ENCODE measurements at regions of chr14 and their contacts with region 1.

Region 1: GRCh38 chr14:100108042-100108825 is 43.0 kb downstream of the EVL start:
- DNase-seq: peak; percentile 82
- ATAC-seq: peak; percentile 85
- H3K4me3 ChIP-seq: no peak overlapping the region
- H3K4me3 Mint-ChIP-seq: no peak overlapping the region
- H3K27ac ChIP-seq: peak overlapping the region; percentile 27 to 56
- H3K27ac Mint-ChIP-seq: peak overlapping the region; percentile 84
- H3K4me1 ChIP-seq: peaks cover 12 to 32% of the 10 kb centered on the region in 2 donors
- H3K4me1 Mint-ChIP-seq: peaks cover 51% of the 10 kb centered on the region
- H3K27me3 ChIP-seq: no peaks in the 10 kb centered on the region
- H3K27me3 Mint-ChIP-seq: no peaks in the 10 kb centered on the region
- CTCF ChIP-seq: peak; percentile 82

Region 2: DNA sequence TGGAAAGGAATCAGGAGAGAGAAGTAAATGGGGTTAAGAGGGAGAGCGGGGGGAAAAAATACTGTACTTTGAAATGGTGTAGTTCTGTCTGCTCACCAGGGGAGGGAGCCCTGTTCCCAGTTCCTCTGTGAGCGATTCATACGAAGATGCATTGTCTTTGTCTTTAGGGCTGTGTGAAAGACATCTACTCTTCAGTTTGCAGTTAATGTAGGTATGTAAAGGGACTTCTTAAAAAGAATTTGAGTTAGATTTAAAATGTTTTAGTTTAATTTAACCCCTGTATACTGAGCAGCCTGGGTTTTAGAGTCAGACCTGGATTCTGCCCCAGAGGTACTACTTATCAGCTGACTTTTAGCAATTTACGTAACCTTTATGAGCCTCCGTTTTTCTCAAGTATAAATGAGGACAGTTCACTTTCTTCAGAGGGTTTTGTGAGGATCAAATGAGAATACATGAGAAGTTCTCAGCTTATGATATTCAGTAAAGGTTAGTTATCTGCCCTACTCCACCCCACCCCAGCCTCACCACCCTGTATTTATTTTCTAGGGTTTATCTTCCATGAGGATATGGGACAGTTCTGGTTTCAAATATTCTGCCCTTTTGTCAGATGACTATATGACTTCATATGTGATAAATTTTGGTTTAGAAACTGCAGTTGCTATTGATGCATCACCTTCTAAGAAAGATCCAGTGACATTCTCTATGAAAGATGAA is 125.5 kb before region 1 on chr14:
- CTCF ChIA-PET with region 1: interaction called, 48 read pairs
- POLR2A ChIA-PET with region 1: no interaction called
- intact Hi-C with region 1: loop called (anchors 1 kb)
- DNase-seq: peak; percentile 74
- ATAC-seq: peak; percentile 99
- H3K4me3 ChIP-seq: no peak overlapping the region
- H3K4me3 Mint-ChIP-seq: no peak overlapping the region
- H3K27ac ChIP-seq: no peak overlapping the region
- H3K27ac Mint-ChIP-seq: no peak overlapping the region
- H3K4me1 ChIP-seq: no peaks in the 10 kb centered on the region
- H3K4me1 Mint-ChIP-seq: no peaks in the 10 kb centered on the region
- H3K27me3 ChIP-seq: no peaks in the 10 kb centered on the region
- H3K27me3 Mint-ChIP-seq: no peaks in the 10 kb centered on the region
- CTCF ChIP-seq: peak; percentile 96

Region 3: DNA sequence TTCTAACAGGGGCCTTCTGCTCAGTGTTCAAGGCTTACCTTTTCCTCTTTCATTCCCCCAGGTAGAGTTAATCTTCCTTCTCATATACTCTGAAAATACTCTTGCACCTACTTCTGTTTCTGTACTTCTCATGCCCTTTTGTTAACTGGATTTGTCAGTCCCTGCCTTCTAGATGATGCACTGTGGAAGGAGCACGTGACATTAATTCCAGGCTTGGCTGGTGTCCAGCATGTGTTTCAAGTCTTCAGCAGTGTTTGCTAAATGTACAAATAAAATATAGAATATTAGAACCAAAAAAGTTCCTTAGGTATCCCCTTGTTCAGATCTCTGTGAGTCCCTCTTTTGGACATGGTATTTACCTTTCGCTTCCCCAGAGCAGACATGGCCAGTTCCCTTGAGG is 70.9 kb before region 1 on chr14:
- CTCF ChIA-PET with region 1: interaction called, 12 read pairs
- POLR2A ChIA-PET with region 1: no interaction called
- intact Hi-C with region 1: no loop called
- DNase-seq: no peak
- ATAC-seq: no peak
- H3K4me3 ChIP-seq: no peak overlapping the region
- H3K4me3 Mint-ChIP-seq: no peak overlapping the region
- H3K27ac ChIP-seq: no peak overlapping the region
- H3K27ac Mint-ChIP-seq: no peak overlapping the region
- H3K4me1 ChIP-seq: no peaks in the 10 kb centered on the region
- H3K4me1 Mint-ChIP-seq: peaks cover 1% of the 10 kb centered on the region
- H3K27me3 ChIP-seq: no peaks in the 10 kb centered on the region
- H3K27me3 Mint-ChIP-seq: peaks cover 4% of the 10 kb centered on the region
- CTCF ChIP-seq: no peak

Region 4: DNA sequence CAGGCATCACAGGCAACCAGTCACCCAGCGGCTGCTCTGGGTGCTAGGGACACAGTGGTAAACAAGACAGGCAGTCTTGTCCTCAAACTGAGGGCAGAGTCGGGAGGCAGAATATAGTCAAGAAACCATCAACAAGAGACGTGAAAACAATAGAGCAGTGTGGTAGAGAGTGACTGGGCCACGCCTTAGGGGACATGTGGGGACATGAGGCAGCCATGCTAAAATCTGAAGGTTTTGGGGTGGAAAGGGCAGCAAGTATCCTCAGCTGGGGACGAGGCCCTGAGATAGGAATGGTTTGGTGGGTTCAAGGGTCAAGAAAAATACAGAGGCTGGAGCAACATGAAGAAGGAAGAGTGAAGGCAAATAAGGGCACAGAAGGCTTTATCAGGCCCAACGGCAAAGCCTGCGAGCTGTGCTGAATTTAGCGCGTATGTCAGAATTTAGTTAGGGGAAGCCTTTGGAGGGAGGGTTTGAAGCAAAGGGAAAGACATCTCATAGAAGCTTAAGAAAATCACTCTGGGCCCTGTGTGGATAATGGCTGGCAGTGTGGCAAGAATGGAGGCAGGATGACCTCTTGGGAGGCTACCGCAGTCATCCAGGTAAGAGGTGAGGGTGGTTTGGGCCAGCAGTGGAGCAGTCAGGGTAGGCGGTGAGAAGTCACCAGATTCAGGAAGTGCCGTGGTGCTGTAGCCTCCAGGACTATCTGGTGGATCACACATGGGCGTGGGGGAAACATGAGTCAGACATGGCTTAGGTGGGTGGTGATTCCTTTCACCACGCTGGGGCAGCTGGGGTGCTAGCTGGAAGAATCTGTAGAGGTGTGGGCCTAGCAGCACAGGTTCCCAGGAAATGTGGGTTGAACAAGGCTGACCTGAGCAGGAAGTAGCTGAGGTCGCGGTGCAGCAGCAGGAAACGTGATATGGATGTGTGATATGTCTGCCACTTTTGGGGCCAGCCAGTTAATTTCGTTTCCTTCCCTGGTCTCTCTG is 40.0 kb before region 1 on chr14:
- CTCF ChIA-PET with region 1: interaction called, 495 read pairs
- POLR2A ChIA-PET with region 1: interaction called, 5 read pairs
- intact Hi-C with region 1: loop called (anchors 2 kb)
- DNase-seq: peak; percentile 80
- ATAC-seq: peak; percentile 41
- H3K4me3 ChIP-seq: peak overlapping the region; percentile 61 to 92 (median 69)
- H3K4me3 Mint-ChIP-seq: peak overlapping the region; percentile 100
- H3K27ac ChIP-seq: peak overlapping the region; percentile 79 to 87
- H3K27ac Mint-ChIP-seq: peak overlapping the region; percentile 98
- H3K4me1 ChIP-seq: peaks cover 77 to 86% of the 10 kb centered on the region in 2 donors
- H3K4me1 Mint-ChIP-seq: peaks cover 93% of the 10 kb centered on the region
- H3K27me3 ChIP-seq: no peaks in the 10 kb centered on the region
- H3K27me3 Mint-ChIP-seq: no peaks in the 10 kb centered on the region
- CTCF ChIP-seq: no peak

Region 5: GRCh38 chr14:100096570-100096971 is 11.7 kb before region 1 on chr14:
- CTCF ChIA-PET with region 1: interaction called, 27 read pairs
- POLR2A ChIA-PET with region 1: interaction called, 3 read pairs
- intact Hi-C with region 1: no loop called
- DNase-seq: no peak
- ATAC-seq: no peak
- H3K4me3 ChIP-seq: no peak overlapping the region
- H3K4me3 Mint-ChIP-seq: no peak overlapping the region
- H3K27ac ChIP-seq: no peak overlapping the region
- H3K27ac Mint-ChIP-seq: no peak overlapping the region
- H3K4me1 ChIP-seq: no peaks in the 10 kb centered on the region
- H3K4me1 Mint-ChIP-seq: peaks cover 36% of the 10 kb centered on the region
- H3K27me3 ChIP-seq: no peaks in the 10 kb centered on the region
- H3K27me3 Mint-ChIP-seq: no peaks in the 10 kb centered on the region
- CTCF ChIP-seq: no peak